Calu3 (cell line): ENCODE measurements at regions of chr1 and their contacts with region 1.

Region 1: DNA sequence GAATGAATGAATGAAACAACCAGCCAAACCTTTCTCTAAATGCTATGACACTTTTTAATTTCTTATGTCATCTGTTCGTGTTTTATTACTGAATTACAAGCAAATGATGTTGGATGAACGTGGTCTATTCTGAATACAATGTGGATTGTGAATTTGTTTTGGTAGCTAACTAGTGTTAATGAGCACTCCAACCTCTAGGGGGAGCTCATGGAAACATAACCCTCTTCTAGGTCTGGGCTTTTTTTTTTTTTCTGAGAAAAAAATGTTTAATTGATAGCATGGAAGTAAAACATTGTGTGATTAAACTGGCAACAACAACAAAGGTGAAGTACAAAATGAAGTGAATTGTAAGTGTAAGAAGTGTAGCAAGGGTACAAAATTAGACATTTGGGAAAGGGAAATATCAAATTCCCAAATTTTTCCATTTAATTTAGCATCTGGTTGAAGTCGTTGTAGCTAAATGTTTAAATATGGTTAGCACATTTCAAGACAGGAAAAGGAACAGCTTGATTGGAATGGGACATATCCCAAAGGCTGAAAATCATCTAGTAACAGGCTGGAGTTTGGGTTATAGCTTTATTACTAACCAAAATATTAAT is 42.6 kb upstream of the PTGS2 start:
- DNase-seq: peak; percentile 58
- H3K4me3 Mint-ChIP-seq: no peak overlapping the region
- H3K27ac Mint-ChIP-seq: no peak overlapping the region
- H3K4me1 Mint-ChIP-seq: no peaks in the 10 kb centered on the region
- H3K27me3 Mint-ChIP-seq: no peaks in the 10 kb centered on the region
- CTCF ChIP-seq: peak; percentile 31

Region 2: GRCh38 chr1:186985889-186986491 is 263.2 kb after region 1 on chr1:
- CTCF ChIA-PET with region 1: no interaction called
- intact Hi-C with region 1: loop called (anchors 2 kb)
- DNase-seq: peak; percentile 35
- H3K4me3 Mint-ChIP-seq: no peak overlapping the region
- H3K27ac Mint-ChIP-seq: peak overlapping the region; percentile 37
- H3K4me1 Mint-ChIP-seq: peaks cover 19% of the 10 kb centered on the region
- H3K27me3 Mint-ChIP-seq: no peaks in the 10 kb centered on the region
- CTCF ChIP-seq: peak; percentile 60